ENCODE measurements at regions of chr4 and their contacts with region 1.

Region 1: GRCh38 chr4:139189972-139190371 is 13.0 kb upstream of the ELF2 start:
- DNase-seq: no peak
- ATAC-seq: no peak
- H3K4me3 ChIP-seq: no peak overlapping the region
- H3K4me3 Mint-ChIP-seq: no peak overlapping the region
- H3K27ac ChIP-seq: no peak overlapping the region
- H3K27ac Mint-ChIP-seq: no peak overlapping the region
- H3K4me1 ChIP-seq: no peaks in the 10 kb centered on the region
- H3K4me1 Mint-ChIP-seq: peaks cover 0 to 5% (median 0%) of the 10 kb centered on the region in 7 donors
- H3K27me3 ChIP-seq: no peaks in the 10 kb centered on the region
- H3K27me3 Mint-ChIP-seq: peaks cover 0 to 6% (median 2%) of the 10 kb centered on the region in 5 donors

Region 2: GRCh38 chr4:138835832-138836533 is 354.0 kb before region 1 on chr4:
- CTCF ChIA-PET with region 1: no interaction called
- POLR2A ChIA-PET with region 1: no interaction called
- intact Hi-C with region 1: no loop called
- DNase-seq: no peak
- ATAC-seq: no peak
- H3K4me3 ChIP-seq: no peak overlapping the region
- H3K4me3 Mint-ChIP-seq: no peak overlapping the region
- H3K27ac ChIP-seq: no peak overlapping the region
- H3K27ac Mint-ChIP-seq: no peak overlapping the region
- H3K4me1 ChIP-seq: no peaks in the 10 kb centered on the region
- H3K4me1 Mint-ChIP-seq: peaks cover 0 to 6% (median 0%) of the 10 kb centered on the region in 7 donors
- H3K27me3 ChIP-seq: no peaks in the 10 kb centered on the region
- H3K27me3 Mint-ChIP-seq: peaks cover 3 to 15% (median 12%) of the 10 kb centered on the region in 5 donors

Region 3: GRCh38 chr4:139154538-139154937 is 35.4 kb before region 1 on chr4:
- CTCF ChIA-PET with region 1: no interaction called
- POLR2A ChIA-PET with region 1: no interaction called
- intact Hi-C with region 1: loop called in 1 of 2 experiments (anchors 1 kb)
- DNase-seq: no peak
- ATAC-seq: no peak
- H3K4me3 ChIP-seq: no peak overlapping the region
- H3K4me3 Mint-ChIP-seq: no peak overlapping the region
- H3K27ac ChIP-seq: no peak overlapping the region
- H3K27ac Mint-ChIP-seq: no peak overlapping the region
- H3K4me1 ChIP-seq: no peaks in the 10 kb centered on the region
- H3K4me1 Mint-ChIP-seq: peaks cover 4 to 12% (median 7%) of the 10 kb centered on the region in 7 donors
- H3K27me3 ChIP-seq: no peaks in the 10 kb centered on the region
- H3K27me3 Mint-ChIP-seq: peaks cover 0 to 7% (median 0%) of the 10 kb centered on the region in 5 donors